ENCODE measurements at regions of chr2 and their contacts with region 1.

Region 1: GRCh38 chr2:39124000-39124745 is 3.3 kb upstream of the SOS1 start:
- DNase-seq: peak; percentile 89 to 98 (median 96)
- ATAC-seq: peak; percentile 68 to 80
- H3K4me3 Mint-ChIP-seq: peak overlapping the region; percentile 85 to 99 (median 94)
- H3K27ac Mint-ChIP-seq: peak overlapping the region; percentile 89 to 99 (median 95)
- H3K4me1 Mint-ChIP-seq: peaks cover 16 to 68% (median 52%) of the 10 kb centered on the region in 4 donors
- H3K27me3 Mint-ChIP-seq: no peaks in the 10 kb centered on the region

Region 2: DNA sequence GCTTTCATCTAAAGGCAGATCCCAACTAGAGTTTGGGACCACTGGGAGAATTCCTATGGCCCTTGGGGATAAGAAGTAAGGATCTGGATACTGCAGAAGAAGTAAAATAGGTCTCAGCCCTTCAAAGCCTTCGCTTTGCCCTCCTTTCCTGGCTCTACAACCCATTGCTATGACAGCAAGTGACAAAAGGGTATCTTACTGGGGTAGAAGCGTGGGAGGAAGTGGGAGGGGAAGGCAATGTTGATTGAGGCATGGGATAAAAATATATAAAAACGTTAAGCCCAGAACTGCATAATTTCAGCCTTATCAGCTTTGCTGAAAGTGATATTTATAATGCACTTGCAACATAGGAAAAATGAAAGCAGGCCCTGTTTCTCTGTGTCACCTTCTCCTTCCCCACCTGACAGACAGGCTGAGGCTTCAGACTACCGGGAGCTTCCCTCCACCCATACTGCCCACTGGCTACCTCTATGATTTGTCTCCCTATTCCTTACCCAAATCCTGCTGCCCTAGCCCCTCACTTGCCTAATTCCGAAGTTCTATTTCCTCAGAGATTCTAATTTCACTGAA is 11.6 kb after region 1 on chr2:
- POLR2A ChIA-PET with region 1: interaction called, 35 read pairs
- DNase-seq: peak in 2 of 10 donors; percentile 22 to 27
- ATAC-seq: peak; percentile 51 to 54
- H3K4me3 Mint-ChIP-seq: peak overlapping the region; percentile 0 to 80 (median 67)
- H3K27ac Mint-ChIP-seq: peak overlapping the region; percentile 44 to 91 (median 80)
- H3K4me1 Mint-ChIP-seq: peaks cover 19 to 54% (median 37%) of the 10 kb centered on the region in 4 donors
- H3K27me3 Mint-ChIP-seq: no peaks in the 10 kb centered on the region

Region 3: DNA sequence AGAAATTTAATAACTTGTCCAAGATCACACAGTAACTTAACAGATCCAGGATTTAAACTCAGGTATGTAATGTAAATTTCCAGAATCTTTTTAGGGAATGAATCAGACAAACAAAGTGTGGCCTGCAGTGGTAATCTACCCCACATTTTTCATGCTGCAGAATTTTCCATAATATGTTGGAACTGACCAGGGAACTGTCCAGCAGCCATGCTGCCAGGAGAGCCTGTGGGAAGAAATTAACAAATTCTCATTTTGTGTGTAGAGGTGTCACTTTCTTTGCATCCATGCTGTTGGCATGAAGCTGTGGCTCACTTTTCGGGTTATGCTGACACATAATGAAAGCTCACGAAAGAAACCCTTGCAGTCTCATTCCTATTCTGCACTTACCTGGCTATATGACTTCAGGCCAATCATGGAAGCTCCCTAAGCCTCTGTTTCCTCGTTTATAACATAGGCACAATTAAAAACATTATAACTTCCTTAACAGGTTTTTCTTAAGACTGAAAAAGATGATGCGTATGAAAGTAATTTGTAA is 64.9 kb after region 1 on chr2:
- POLR2A ChIA-PET with region 1: no interaction called
- DNase-seq: no peak
- ATAC-seq: no peak
- H3K4me3 Mint-ChIP-seq: no peak overlapping the region
- H3K27ac Mint-ChIP-seq: no peak overlapping the region
- H3K4me1 Mint-ChIP-seq: peaks cover 0 to 6% (median 2%) of the 10 kb centered on the region in 4 donors
- H3K27me3 Mint-ChIP-seq: no peaks in the 10 kb centered on the region

Region 4: GRCh38 chr2:39216346-39217191 is 92.4 kb after region 1 on chr2:
- POLR2A ChIA-PET with region 1: interaction called, 65 read pairs
- DNase-seq: peak; percentile 28 to 93 (median 78)
- ATAC-seq: peak; percentile 93 to 97
- H3K4me3 Mint-ChIP-seq: peak overlapping the region; percentile 25 to 77 (median 58)
- H3K27ac Mint-ChIP-seq: peak overlapping the region; percentile 43 to 94 (median 73)
- H3K4me1 Mint-ChIP-seq: peaks cover 18 to 50% (median 43%) of the 10 kb centered on the region in 4 donors
- H3K27me3 Mint-ChIP-seq: no peaks in the 10 kb centered on the region

Region 5: GRCh38 chr2:39227628-39228412 is 103.6 kb after region 1 on chr2:
- POLR2A ChIA-PET with region 1: interaction called, 107 read pairs
- DNase-seq: peak; percentile 57 to 87 (median 79)
- ATAC-seq: peak; percentile 88
- H3K4me3 Mint-ChIP-seq: peak overlapping the region; percentile 69 to 88 (median 75)
- H3K27ac Mint-ChIP-seq: peak overlapping the region in 9 of 10 donors; percentile 23 to 83 (median 65)
- H3K4me1 Mint-ChIP-seq: peaks cover 9 to 23% (median 17%) of the 10 kb centered on the region in 4 donors
- H3K27me3 Mint-ChIP-seq: peaks cover 0 to 2% (median 0%) of the 10 kb centered on the region in 5 donors

Region 6: DNA sequence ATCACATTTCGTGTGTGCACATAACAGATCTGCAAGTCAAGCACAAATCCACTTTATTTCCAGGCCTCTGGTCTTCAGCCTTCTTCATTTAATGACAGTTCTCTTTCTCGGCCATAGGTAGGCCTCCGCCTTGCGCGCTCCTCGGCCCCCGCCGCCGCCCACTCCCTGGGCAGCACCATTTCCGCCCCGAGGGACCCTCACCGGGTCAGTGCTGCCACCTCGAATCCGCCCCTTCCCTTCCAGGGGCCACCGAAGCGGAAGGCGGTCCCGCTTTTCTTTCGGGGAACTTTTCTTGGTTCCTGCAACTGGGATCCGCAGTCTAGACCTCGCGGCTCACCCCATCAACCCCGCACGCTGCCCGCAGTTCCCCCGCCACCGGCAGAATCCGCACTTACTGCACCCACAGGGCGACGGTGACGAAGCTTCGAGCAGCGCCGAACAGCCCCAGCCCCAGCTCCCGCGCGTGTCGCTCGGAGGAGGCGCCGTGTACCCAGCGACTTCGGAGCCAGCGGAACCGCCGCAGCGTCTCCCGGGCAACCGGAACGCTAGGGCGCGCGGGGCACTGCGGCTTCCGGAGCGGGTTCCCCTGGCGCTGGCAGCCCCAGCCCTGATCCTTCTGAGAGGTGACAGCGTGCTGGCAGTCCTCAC is 119.4 kb after region 1 on chr2 and contains the start of gene CDKL4:
- POLR2A ChIA-PET with region 1: interaction called, 10 read pairs
- DNase-seq: peak in 7 of 10 donors; percentile 22 to 66 (median 38)
- ATAC-seq: peak; percentile 77 to 78
- H3K4me3 Mint-ChIP-seq: peak within 1 kb of the TSS; percentile 84 to 92 (median 90)
- H3K27ac Mint-ChIP-seq: peak within 1 kb of the TSS in 9 of 10 donors; percentile 68 to 88 (median 83)
- H3K4me1 Mint-ChIP-seq: peaks cover 15 to 24% (median 19%) of the 10 kb centered on the region in 4 donors
- H3K27me3 Mint-ChIP-seq: no peaks in the 10 kb centered on the region
- polyA plus RNA-seq, gene CDKL4: not detected

Measured in naive thymus-derived CD8-positive, alpha-beta T cell (primary cell).